Head of caudate nucleus (tissue), 42 donors: ENCODE measurements at regions of chr2 and their contacts with region 1.

Region 1: GRCh38 chr2:11344342-11344955 is at the start of gene ROCK2:
- DNase-seq: peak; percentile 54 to 93 (median 86)

Region 2: DNA sequence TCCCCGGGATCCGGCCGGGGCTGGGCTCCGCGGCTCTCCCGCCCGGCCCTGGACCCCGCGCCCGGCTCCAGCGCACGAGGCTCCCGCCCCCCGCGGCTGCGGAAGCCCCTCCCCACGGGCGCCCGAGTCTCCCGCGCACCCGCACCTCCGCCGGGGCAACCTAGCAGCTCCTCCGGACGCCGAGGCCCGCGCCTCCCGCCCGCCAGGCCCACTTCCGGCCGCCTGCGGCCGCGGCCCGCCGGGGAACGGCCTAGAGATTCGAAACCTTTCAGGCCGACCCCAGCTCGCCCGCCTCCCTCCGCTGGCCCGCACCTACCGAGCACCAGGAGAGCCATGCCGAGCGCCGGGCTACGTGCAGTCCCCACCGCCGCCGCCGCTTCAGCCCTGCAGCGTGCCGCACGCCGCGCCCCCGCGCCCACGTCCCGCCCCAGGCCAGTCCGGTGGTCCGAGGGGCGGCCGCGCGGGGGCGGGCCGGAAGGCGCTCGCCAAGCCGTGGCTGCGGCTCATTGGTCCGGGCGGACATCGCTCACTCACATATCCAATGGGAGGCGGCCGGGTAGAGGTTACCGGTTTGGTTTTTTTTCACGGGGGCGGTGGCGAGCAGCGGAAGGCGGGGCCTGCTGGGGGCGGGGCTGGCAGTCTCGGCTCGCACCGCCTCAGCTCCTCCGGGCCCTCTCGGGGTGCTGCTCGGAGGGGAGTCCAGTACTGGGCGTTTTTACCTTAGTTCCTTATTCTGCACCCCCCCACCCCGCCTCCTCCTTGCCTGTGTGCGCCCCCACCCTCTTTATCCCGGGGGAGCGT is 531.9 kb before region 1 on chr2 and contains the start of gene PDIA6:
- intact Hi-C with region 1: loop called (anchors 5 kb)
- DNase-seq: peak; percentile 92 to 99 (median 97)

Region 3: GRCh38 chr2:11154923-11155380 is 189.5 kb before region 1 on chr2:
- intact Hi-C with region 1: loop called (anchors 10 kb)
- DNase-seq: peak; percentile 87 to 98 (median 95)